ENCODE measurements at regions of chr21 and their contacts with region 1.

Region 1: GRCh38 chr21:41832596-41833496 is 46.3 kb downstream of the PRDM15 start:
- DNase-seq: peak; percentile 77
- H3K4me3 ChIP-seq: peak overlapping the region; percentile 43
- H3K27ac ChIP-seq: peak overlapping the region; percentile 95
- H3K4me1 ChIP-seq: peaks cover 71% of the 10 kb centered on the region
- CTCF ChIP-seq: peak; percentile 66

Region 2: GRCh38 chr21:41733949-41734645 is 98.7 kb before region 1 on chr21:
- CTCF ChIA-PET with region 1: no interaction called
- POLR2A ChIA-PET with region 1: no interaction called
- intact Hi-C with region 1: no loop called
- DNase-seq: no peak
- H3K4me3 ChIP-seq: no peak overlapping the region
- H3K27ac ChIP-seq: no peak overlapping the region
- H3K4me1 ChIP-seq: peaks cover 11% of the 10 kb centered on the region
- CTCF ChIP-seq: no peak

Region 3: GRCh38 chr21:41768437-41769061 is 64.3 kb before region 1 on chr21:
- CTCF ChIA-PET with region 1: no interaction called
- POLR2A ChIA-PET with region 1: no interaction called
- intact Hi-C with region 1: no loop called
- DNase-seq: peak; percentile 38
- H3K4me3 ChIP-seq: peak overlapping the region; percentile 32
- H3K27ac ChIP-seq: no peak overlapping the region
- H3K4me1 ChIP-seq: peaks cover 26% of the 10 kb centered on the region
- CTCF ChIP-seq: peak; percentile 45

Region 4: DNA sequence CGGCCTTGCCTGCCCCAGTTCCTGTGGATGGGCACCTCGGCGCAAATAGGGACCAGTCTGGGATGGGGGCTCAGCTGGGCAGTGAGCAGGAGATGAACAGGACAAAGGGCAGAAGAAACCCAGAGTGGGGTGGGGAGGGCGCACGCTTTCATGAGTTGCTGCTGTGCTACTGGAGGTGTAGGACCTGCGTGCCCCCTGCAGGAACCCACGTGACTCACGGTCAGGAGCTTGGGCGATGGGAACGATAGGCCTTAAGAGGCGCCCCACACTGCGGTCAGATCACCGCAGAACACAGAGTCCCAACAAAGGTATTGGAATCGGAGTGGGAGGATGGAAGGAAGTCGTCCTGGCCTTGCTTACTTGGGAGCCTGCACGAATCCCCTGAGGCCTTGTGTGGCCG is 29.1 kb after region 1 on chr21:
- CTCF ChIA-PET with region 1: no interaction called
- POLR2A ChIA-PET with region 1: interaction called, 14 read pairs
- intact Hi-C with region 1: loop called (anchors 1 kb)
- DNase-seq: peak; percentile 69
- H3K4me3 ChIP-seq: peak overlapping the region; percentile 64
- H3K27ac ChIP-seq: peak overlapping the region; percentile 96
- H3K4me1 ChIP-seq: peaks cover 67% of the 10 kb centered on the region
- CTCF ChIP-seq: peak; percentile 67

Region 5: DNA sequence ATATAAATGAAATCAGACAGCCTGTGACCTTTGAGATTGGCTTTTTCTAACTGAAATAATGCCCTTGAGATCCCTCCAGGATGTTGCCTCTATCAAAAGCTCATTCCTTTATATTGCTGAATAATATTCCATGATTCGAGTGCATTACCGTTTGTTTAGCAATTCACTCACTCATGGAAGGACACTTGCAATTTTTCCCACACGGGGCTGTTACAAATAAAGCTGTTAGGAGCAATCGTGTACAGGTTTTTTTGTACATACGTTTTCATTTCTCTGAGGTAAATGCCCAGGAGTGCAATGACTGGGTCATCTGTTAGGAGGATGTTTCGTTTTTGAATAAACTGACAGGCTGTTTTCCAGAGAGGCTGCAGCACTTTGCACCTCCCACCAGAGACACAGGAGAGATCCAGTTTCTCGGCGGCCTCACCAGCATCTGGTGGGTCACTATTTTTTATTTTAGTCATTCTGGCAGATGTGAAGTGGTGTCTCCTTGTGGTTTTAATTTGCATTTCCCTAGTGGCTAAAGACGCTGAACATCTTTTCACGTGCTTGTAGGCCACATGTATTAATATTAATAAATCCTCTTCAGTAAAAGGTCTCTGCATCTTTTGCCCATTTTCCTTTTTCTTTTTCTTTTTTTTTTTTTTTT is 35.3 kb after region 1 on chr21:
- CTCF ChIA-PET with region 1: no interaction called
- POLR2A ChIA-PET with region 1: interaction called, 14 read pairs
- intact Hi-C with region 1: loop called (anchors 1 kb)
- DNase-seq: peak; percentile 96
- H3K4me3 ChIP-seq: peak overlapping the region; percentile 58
- H3K27ac ChIP-seq: peak overlapping the region; percentile 96
- H3K4me1 ChIP-seq: peaks cover 98% of the 10 kb centered on the region
- CTCF ChIP-seq: no peak